CD14-positive monocyte (primary cell): ENCODE measurements at regions of chr10 and their contacts with region 1.

Region 1: DNA sequence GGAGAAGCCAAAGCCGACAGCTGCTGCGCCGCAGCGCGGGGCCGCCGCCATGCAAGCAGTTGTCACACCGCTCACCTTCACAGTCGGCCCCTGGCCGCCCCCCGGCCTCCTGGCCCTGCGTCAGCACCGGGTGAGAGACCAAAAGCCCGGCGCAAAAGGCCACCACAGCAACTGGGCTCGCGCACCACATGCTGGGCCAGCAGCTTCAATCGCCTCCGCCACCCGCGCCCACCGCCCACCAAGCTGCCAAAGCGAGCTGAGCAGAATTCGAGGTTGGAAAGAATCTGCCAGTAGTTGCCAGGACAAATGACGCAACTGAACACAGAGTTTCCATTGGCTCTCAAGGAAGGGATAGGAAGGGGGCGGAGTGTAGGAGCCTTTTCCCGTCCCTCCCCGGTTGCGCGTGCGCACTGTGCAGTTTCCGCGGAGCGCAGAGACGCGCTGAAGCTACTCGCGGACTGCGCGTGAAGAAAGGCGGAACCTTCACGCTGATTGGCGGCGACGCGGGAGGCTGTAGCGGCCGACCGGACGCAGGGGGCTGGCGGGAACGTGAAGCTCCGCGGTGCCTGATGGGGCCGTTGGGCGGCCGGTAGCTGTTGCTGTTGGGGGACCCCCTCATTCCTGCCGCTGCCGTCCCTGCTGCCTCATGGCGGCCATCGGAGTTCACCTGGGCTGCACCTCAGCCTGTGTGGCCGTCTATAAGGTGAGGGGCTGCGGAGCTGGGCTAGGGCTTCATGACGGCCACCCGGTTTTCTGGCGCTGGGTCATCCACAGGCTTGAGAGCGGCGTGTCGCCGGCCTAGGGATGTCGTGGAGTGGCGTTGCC is at the starts of genes CDNF, HSPA14 and MSANTD7:
- DNase-seq: peak; percentile 99 to 100 (median 100)
- H3K4me3 ChIP-seq: peak within 1 kb of the TSS; percentile 77 to 96 (median 88)
- H3K4me3 Mint-ChIP-seq: peak within 1 kb of the TSS; percentile 93 to 94
- H3K27ac ChIP-seq: peak within 1 kb of the TSS; percentile 71 to 84
- H3K27ac Mint-ChIP-seq: peak within 1 kb of the TSS; percentile 87 to 97 (median 94)
- H3K4me1 ChIP-seq: peaks cover 18 to 21% of the 10 kb centered on the region in 2 donors
- H3K4me1 Mint-ChIP-seq: peaks cover 18% of the 10 kb centered on the region
- H3K27me3 ChIP-seq: no peaks in the 10 kb centered on the region
- H3K27me3 Mint-ChIP-seq: peaks cover 0 to 1% (median 0%) of the 10 kb centered on the region in 3 donors
- CTCF ChIP-seq: no peak
- polyA plus RNA-seq, gene CDNF: 0.28 TPM in 2 of 3 donors, not detected in the other
- polyA plus RNA-seq, gene HSPA14: 10.4 to 19.3 (median 15.4) TPM
- polyA plus RNA-seq, gene MSANTD7: 5.0 to 7.6 (median 7.3) TPM

Region 2: GRCh38 chr10:14500172-14500765 is 337.7 kb before region 1 on chr10:
- intact Hi-C with region 1: loop called in 1 of 2 experiments (anchors 5 kb)
- DNase-seq: peak in 2 of 3 donors; percentile 3
- H3K4me3 ChIP-seq: no peak overlapping the region
- H3K4me3 Mint-ChIP-seq: no peak overlapping the region
- H3K27ac ChIP-seq: no peak overlapping the region
- H3K27ac Mint-ChIP-seq: peak overlapping the region in 3 of 7 donors; percentile 37 to 65 (median 63)
- H3K4me1 ChIP-seq: peaks cover 3 to 14% of the 10 kb centered on the region in 2 donors
- H3K4me1 Mint-ChIP-seq: peaks cover 19% of the 10 kb centered on the region
- H3K27me3 ChIP-seq: no peaks in the 10 kb centered on the region
- H3K27me3 Mint-ChIP-seq: peaks cover 7 to 8% (median 8%) of the 10 kb centered on the region in 3 donors
- CTCF ChIP-seq: no peak

Region 3: GRCh38 chr10:14604181-14605142 is 233.5 kb before region 1 on chr10:
- intact Hi-C with region 1: loop called in 1 of 2 experiments (anchors 5 kb)
- DNase-seq: peak; percentile 61 to 84 (median 82)
- H3K4me3 ChIP-seq: peak overlapping the region; percentile 75 to 100 (median 81)
- H3K4me3 Mint-ChIP-seq: peak overlapping the region; percentile 97 to 98
- H3K27ac ChIP-seq: peak overlapping the region; percentile 68 to 96
- H3K27ac Mint-ChIP-seq: peak overlapping the region; percentile 98 to 100 (median 99)
- H3K4me1 ChIP-seq: peaks cover 62 to 64% of the 10 kb centered on the region in 2 donors
- H3K4me1 Mint-ChIP-seq: peaks cover 64% of the 10 kb centered on the region
- H3K27me3 ChIP-seq: no peaks in the 10 kb centered on the region
- H3K27me3 Mint-ChIP-seq: peaks cover 0 to 3% (median 0%) of the 10 kb centered on the region in 3 donors
- CTCF ChIP-seq: no peak

Region 4: DNA sequence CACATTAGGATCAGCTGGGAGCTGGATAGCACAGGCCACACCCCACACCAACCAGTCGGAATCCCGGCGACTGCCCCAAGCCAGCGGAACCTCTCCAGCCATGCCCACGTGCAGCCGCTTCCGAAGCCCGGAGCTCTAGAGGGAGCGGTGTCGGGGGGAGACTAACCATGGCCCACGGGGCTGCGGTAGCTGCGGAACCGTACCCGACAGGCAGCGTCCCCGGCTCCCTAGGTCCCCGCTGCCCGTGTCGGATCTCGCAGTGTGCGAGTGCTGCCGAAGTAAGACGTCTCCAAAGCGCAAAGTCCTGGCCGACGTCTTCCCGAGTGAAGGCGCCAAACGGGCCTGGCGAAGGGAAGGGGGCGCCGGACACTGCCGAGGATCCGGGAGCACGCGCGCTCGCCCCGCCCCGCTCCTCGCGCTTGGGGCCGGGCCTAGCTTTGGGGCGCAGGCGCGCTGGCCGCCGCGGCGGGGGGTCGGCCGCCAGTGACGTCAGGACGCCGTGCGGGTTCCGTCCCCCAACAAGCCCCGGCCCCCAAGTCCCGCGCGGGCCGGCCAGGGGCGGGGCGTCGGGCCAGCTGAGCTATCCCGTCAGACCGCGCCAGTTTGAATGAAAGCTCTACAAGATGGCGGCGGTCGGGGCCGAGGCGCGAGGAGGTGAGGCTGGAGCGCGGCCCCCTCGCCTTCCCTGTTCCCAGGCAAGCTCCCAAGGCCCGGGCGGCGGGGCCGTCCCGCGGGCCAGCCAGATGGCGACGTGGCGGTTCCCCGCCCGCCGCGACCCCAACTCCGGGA is 40.5 kb after region 1 on chr10 and contains the start of gene SUV39H2:
- intact Hi-C with region 1: loop called (anchors 2 kb)
- DNase-seq: peak; percentile 90 to 94 (median 91)
- H3K4me3 ChIP-seq: peak within 1 kb of the TSS; percentile 84 to 97 (median 91)
- H3K4me3 Mint-ChIP-seq: peak within 1 kb of the TSS; percentile 95
- H3K27ac ChIP-seq: peak within 1 kb of the TSS; percentile 84 to 93
- H3K27ac Mint-ChIP-seq: peak within 1 kb of the TSS; percentile 85 to 95 (median 92)
- H3K4me1 ChIP-seq: peaks cover 20 to 44% of the 10 kb centered on the region in 2 donors
- H3K4me1 Mint-ChIP-seq: peaks cover 46% of the 10 kb centered on the region
- H3K27me3 ChIP-seq: no peaks in the 10 kb centered on the region
- H3K27me3 Mint-ChIP-seq: peaks cover 0 to 2% (median 0%) of the 10 kb centered on the region in 3 donors
- CTCF ChIP-seq: no peak
- polyA plus RNA-seq, gene SUV39H2: 0.85 to 1.2 (median 0.86) TPM

Region 5: DNA sequence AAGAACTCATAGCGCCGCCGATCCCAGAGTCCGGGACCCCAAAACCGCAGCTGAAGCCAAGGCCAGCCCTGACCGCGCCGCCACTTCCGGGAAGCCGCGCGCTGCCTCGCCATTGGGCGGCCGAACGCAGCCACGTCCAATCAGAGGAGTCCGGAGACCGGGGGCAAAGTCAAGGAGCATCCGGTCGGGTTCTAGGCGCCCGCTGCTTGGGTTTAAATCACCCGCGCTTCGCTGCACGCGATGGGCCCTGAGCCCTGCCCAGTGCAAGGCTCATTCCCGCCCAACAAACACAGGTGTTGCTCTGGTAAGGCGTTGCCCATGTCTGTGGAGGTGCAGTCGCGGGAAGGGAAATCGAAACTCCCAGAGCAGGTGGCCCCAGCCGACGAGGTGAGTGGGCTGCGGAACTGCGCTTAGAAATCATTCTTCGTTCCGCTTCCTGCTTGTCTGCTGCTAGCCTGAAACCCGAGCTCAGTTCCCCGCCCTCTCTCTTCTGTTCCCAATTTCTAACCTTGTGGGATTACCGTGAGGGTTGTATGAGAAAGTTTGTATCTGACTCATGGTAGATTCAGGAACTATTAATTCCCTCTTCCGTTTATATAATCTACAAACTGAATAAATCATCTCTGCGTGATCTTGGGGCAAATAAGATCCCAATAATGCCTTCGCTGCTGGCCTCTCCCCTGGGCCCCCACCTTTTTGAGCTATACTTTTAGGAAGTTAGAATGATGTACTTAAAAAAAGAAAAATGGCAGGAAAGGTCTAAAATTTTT is 116.2 kb after region 1 on chr10 and contains the start of gene DCLRE1C:
- intact Hi-C with region 1: loop called (anchors 5 to 10 kb)
- DNase-seq: peak; percentile 82 to 92 (median 89)
- H3K4me3 ChIP-seq: peak within 1 kb of the TSS; percentile 51 to 82 (median 80)
- H3K4me3 Mint-ChIP-seq: peak within 1 kb of the TSS; percentile 86 to 93
- H3K27ac ChIP-seq: peak within 1 kb of the TSS; percentile 93 to 95
- H3K27ac Mint-ChIP-seq: peak within 1 kb of the TSS; percentile 91 to 97 (median 96)
- H3K4me1 ChIP-seq: peaks cover 47 to 61% of the 10 kb centered on the region in 2 donors
- H3K4me1 Mint-ChIP-seq: peaks cover 44% of the 10 kb centered on the region
- H3K27me3 ChIP-seq: no peaks in the 10 kb centered on the region
- H3K27me3 Mint-ChIP-seq: no peaks in the 10 kb centered on the region
- CTCF ChIP-seq: no peak
- polyA plus RNA-seq, gene DCLRE1C: 8.9 to 17.6 (median 10.9) TPM

Region 6: DNA sequence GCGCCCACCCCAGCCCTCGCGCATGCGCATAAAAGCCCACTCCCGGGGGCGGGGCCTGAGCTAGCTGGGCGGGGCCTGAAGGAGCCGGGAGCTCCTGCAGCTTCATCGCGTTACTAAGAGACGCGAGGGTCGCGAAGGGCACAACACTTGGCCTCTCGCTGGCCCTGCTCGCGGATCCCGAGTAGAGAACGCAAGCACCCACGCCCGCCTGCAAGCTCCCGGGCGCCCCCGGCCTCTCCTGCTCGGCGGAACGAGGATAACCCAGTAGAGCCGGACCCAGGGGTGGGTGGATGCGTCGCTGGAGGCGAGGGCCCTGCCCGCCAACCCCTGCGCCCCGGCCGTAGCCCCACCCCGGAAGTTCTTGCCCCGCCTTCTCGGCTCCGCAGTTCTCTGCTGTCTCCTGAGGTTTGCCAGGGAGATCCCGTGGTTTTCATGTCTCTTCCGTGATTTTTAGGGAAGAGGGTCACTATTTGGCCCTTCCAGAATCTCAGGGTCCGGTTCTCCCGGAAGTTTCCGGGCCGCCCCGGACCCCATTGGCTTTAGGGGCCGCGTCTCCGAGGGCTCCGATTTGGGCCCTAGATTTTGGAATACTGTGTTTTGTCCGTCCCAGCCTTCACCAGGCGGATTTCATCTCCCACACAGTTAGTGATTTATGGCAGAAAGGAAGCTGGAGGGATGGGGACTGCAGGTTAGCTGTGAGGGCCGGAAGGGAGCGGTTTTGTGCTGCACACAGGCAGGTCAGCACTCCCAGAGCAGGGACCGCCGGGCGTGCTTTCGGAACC is 121.5 kb after region 1 on chr10 and contains the start of gene MEIG1:
- intact Hi-C with region 1: loop called (anchors 5 to 10 kb)
- DNase-seq: peak; percentile 70 to 77 (median 71)
- H3K4me3 ChIP-seq: peak within 1 kb of the TSS; percentile 61 to 99 (median 73)
- H3K4me3 Mint-ChIP-seq: peak within 1 kb of the TSS; percentile 97 to 98
- H3K27ac ChIP-seq: peak within 1 kb of the TSS; percentile 81 to 88
- H3K27ac Mint-ChIP-seq: peak within 1 kb of the TSS; percentile 95 to 99 (median 98)
- H3K4me1 ChIP-seq: peaks cover 19 to 36% of the 10 kb centered on the region in 2 donors
- H3K4me1 Mint-ChIP-seq: peaks cover 17% of the 10 kb centered on the region
- H3K27me3 ChIP-seq: no peaks in the 10 kb centered on the region
- H3K27me3 Mint-ChIP-seq: peaks cover 0 to 3% (median 0%) of the 10 kb centered on the region in 3 donors
- CTCF ChIP-seq: no peak
- polyA plus RNA-seq, gene MEIG1: 0.47 TPM in 1 of 3 donors, not detected in the others

Region 7: GRCh38 chr10:15072358-15072757 is 234.4 kb after region 1 on chr10:
- intact Hi-C with region 1: no loop called
- DNase-seq: no peak
- H3K4me3 ChIP-seq: no peak overlapping the region
- H3K4me3 Mint-ChIP-seq: no peak overlapping the region
- H3K27ac ChIP-seq: no peak overlapping the region
- H3K27ac Mint-ChIP-seq: no peak overlapping the region
- H3K4me1 ChIP-seq: no peaks in the 10 kb centered on the region
- H3K4me1 Mint-ChIP-seq: no peaks in the 10 kb centered on the region
- H3K27me3 ChIP-seq: no peaks in the 10 kb centered on the region
- H3K27me3 Mint-ChIP-seq: peaks cover 0 to 8% (median 2%) of the 10 kb centered on the region in 3 donors
- CTCF ChIP-seq: no peak

Region 8: GRCh38 chr10:15097011-15097812 is 259.2 kb after region 1 on chr10 and contains the start of gene RPP38:
- intact Hi-C with region 1: loop called in 1 of 2 experiments (anchors 5 kb)
- DNase-seq: peak; percentile 92 to 94 (median 94)
- H3K4me3 ChIP-seq: peak within 1 kb of the TSS; percentile 67 to 81 (median 81)
- H3K4me3 Mint-ChIP-seq: peak within 1 kb of the TSS; percentile 98 to 99
- H3K27ac ChIP-seq: peak within 1 kb of the TSS; percentile 95 to 96
- H3K27ac Mint-ChIP-seq: peak within 1 kb of the TSS; percentile 97 to 99 (median 98)
- H3K4me1 ChIP-seq: peaks cover 19 to 21% of the 10 kb centered on the region in 2 donors
- H3K4me1 Mint-ChIP-seq: peaks cover 23% of the 10 kb centered on the region
- H3K27me3 ChIP-seq: no peaks in the 10 kb centered on the region
- H3K27me3 Mint-ChIP-seq: peaks cover 0 to 8% (median 2%) of the 10 kb centered on the region in 3 donors
- CTCF ChIP-seq: no peak
- polyA plus RNA-seq, gene RPP38: 8.1 to 13.8 (median 13.3) TPM

Region 9: GRCh38 chr10:15585303-15585715 is 747.3 kb after region 1 on chr10:
- intact Hi-C with region 1: no loop called
- DNase-seq: peak in 1 of 3 donors; percentile 4
- H3K4me3 ChIP-seq: no peak overlapping the region
- H3K4me3 Mint-ChIP-seq: no peak overlapping the region
- H3K27ac ChIP-seq: no peak overlapping the region
- H3K27ac Mint-ChIP-seq: no peak overlapping the region
- H3K4me1 ChIP-seq: no peaks in the 10 kb centered on the region
- H3K4me1 Mint-ChIP-seq: no peaks in the 10 kb centered on the region
- H3K27me3 ChIP-seq: peaks cover 0 to 2% of the 10 kb centered on the region in 2 donors
- H3K27me3 Mint-ChIP-seq: peaks cover 0 to 4% (median 2%) of the 10 kb centered on the region in 3 donors
- CTCF ChIP-seq: peak; percentile 63